Endothelial cell of umbilical vein (primary cell): ENCODE measurements at regions of chr3 and their contacts with region 1.

Region 1: GRCh38 chr3:177345049-177345972 is 148.0 kb upstream of the TBL1XR1 start:
- DNase-seq: peak; percentile 97
- H3K4me3 ChIP-seq: peak overlapping the region in 1 of 3 experiments; percentile 28
- H3K27ac ChIP-seq: peak overlapping the region; percentile 99
- H3K4me1 ChIP-seq: peaks cover 34% of the 10 kb centered on the region
- H3K27me3 ChIP-seq: no peaks in the 10 kb centered on the region
- CTCF ChIP-seq: no peak
- POLR2A ChIP-seq: peak; percentile 57

Region 2: DNA sequence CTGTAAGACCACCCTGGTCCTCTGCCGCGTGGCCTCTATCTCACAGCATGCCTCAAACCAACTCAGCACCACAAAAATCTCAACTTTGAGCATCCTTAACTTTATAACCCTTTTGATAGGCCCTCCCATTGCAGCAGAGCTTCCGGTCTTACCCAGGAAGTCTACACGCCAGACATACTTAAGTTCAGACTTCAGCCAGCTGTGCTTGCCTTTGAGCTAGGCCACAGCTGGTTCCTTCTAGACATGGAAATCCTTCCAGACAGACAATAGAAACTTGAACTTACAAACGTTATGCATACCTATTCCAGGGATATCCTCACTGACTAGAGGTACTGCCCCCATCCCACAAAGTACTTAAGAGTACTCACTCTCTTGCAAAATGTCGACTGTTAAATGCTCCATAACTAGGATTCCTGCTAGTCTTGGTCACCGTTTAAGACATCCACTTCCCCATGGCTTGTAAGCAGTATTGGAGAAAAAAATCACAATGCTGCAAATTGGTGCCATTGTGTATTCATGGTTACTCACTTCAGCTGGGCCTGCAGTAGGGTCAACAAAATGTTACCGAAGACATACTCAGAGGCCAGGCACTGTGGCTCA is 331.5 kb before region 1 on chr3:
- CTCF ChIA-PET with region 1: no interaction called
- POLR2A ChIA-PET with region 1: no interaction called
- dilution Hi-C with region 1: no loop called
- intact Hi-C with region 1: no loop called
- DNase-seq: no peak
- H3K4me3 ChIP-seq: no peak overlapping the region
- H3K27ac ChIP-seq: no peak overlapping the region
- H3K4me1 ChIP-seq: no peaks in the 10 kb centered on the region
- H3K27me3 ChIP-seq: no peaks in the 10 kb centered on the region
- CTCF ChIP-seq: no peak
- POLR2A ChIP-seq: no peak

Region 3: DNA sequence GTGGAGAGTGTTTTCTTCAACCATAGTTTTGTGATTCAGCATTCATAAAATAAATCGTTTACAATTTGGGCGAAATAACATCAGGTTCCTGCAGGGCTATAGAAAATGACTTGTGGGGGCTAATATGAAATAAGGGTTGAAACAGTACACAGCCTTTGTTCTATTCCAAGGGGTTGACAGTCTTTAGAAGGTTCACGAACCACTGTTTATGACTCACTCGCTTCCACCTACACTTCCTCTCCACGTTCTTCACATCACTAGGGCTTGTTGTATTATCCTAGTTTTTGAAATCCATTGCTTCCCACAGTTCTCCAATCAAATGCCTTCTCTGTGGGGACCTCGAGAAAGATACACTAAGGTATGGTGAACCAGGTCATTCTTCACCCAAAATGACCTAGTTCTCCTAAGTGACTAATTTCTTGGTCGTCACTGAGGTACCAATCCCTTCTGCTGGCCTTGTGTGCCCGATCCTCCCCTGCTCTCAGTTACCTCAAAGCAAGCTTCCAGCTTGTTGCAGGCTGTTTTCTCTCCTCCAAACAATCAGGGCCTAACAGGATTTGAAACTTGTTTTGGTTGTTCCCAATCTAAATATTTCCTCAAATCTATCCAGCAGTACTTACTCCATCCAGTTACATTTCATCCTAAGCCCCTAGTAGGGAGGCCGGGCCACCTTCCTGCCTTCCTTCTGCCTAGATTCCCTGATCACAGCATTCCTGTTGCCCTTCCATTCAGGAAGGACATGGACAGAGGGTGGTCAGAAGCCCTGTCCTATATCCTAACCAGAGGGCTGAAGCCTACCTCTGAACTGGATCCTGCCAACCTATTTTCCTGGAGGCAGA is 125.0 kb before region 1 on chr3:
- CTCF ChIA-PET with region 1: no interaction called
- POLR2A ChIA-PET with region 1: no interaction called
- dilution Hi-C with region 1: no loop called
- intact Hi-C with region 1: no loop called
- DNase-seq: no peak
- H3K4me3 ChIP-seq: no peak overlapping the region
- H3K27ac ChIP-seq: no peak overlapping the region
- H3K4me1 ChIP-seq: no peaks in the 10 kb centered on the region
- H3K27me3 ChIP-seq: no peaks in the 10 kb centered on the region
- CTCF ChIP-seq: no peak
- POLR2A ChIP-seq: no peak

Region 4: GRCh38 chr3:177234121-177234520 is 111.2 kb before region 1 on chr3:
- CTCF ChIA-PET with region 1: interaction called, 3 read pairs
- POLR2A ChIA-PET with region 1: no interaction called
- dilution Hi-C with region 1: no loop called
- intact Hi-C with region 1: loop called (anchors 1 kb)
- DNase-seq: peak; percentile 55
- H3K4me3 ChIP-seq: no peak overlapping the region
- H3K27ac ChIP-seq: peak overlapping the region; percentile 37
- H3K4me1 ChIP-seq: peaks cover 7% of the 10 kb centered on the region
- H3K27me3 ChIP-seq: no peaks in the 10 kb centered on the region
- CTCF ChIP-seq: no peak
- POLR2A ChIP-seq: no peak

Region 5: GRCh38 chr3:177320765-177321247 is 24.5 kb before region 1 on chr3:
- CTCF ChIA-PET with region 1: no interaction called
- POLR2A ChIA-PET with region 1: no interaction called
- dilution Hi-C with region 1: no loop called
- intact Hi-C with region 1: loop called (anchors 2 kb)
- DNase-seq: peak; percentile 83
- H3K4me3 ChIP-seq: no peak overlapping the region
- H3K27ac ChIP-seq: no peak overlapping the region
- H3K4me1 ChIP-seq: peaks cover 13% of the 10 kb centered on the region
- H3K27me3 ChIP-seq: no peaks in the 10 kb centered on the region
- CTCF ChIP-seq: no peak
- POLR2A ChIP-seq: no peak